Aorta (tissue), 5 donors: ENCODE measurements at regions of chr18 and their contacts with region 1.

Region 1: GRCh38 chr18:3593904-3594661 is 144.1 kb downstream of the TGIF1 start:
- DNase-seq: peak; percentile 89 to 90
- ATAC-seq: peak; percentile 94
- H3K4me3 ChIP-seq: peak overlapping the region; percentile 59 to 85
- H3K27ac ChIP-seq: peak overlapping the region; percentile 95 to 100
- H3K4me1 ChIP-seq: peaks cover 7 to 13% of the 10 kb centered on the region in 2 donors
- H3K27me3 ChIP-seq: no peaks in the 10 kb centered on the region

Region 2: DNA sequence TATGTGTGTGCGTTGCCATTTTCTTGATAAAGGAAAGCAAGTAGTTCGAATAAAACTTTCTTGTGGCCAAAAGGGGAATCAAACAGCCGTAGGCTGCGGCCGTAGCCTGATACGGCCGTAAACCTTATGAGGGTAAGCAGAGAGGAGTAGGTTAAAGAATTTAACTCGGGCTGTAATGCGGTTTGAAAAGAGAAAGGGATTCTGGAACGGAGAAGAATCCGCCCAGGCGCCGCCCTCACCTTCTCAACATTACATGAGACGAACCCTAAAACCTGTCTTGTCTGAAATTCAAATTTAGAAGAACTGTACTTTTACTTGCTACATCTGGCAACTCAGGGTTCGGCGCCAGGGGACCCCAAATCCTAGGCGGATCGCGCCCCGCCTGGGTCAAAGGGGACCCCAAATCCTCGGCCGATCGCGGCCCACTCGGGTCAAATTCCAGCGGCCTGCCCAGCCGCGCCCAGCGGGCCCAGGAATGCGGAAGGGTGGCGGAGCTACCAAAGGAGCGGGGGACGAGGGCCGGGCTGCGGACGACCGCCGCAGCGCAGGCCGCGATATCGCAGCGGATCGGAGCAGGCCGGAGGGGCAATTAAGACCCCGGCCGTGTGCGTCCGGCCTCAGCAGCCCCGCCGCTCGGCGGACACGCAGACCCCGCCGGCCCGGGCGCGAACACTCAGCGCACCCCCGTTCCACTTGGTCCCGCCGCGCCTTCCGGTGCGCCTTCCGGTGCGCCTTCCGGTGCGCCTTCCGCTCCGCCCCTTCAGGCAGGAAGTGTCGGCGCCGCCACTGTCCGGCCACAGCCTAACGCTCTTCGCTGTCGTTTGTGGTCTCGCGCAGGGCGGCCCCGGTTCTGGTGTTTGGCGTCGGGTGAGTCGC is 332.5 kb before region 1 on chr18 and contains the start of gene MYL12B:
- intact Hi-C with region 1: loop called in 1 of 2 experiments (anchors 10 kb)
- DNase-seq: peak; percentile 87 to 92
- ATAC-seq: peak; percentile 95
- H3K4me3 ChIP-seq: peak within 1 kb of the TSS; percentile 65 to 87
- H3K27ac ChIP-seq: peak within 1 kb of the TSS; percentile 66 to 87
- H3K4me1 ChIP-seq: peaks cover 0 to 7% of the 10 kb centered on the region in 2 donors
- H3K27me3 ChIP-seq: no peaks in the 10 kb centered on the region
- total RNA-seq, gene MYL12B: 259 to 324 TPM

Region 3: DNA sequence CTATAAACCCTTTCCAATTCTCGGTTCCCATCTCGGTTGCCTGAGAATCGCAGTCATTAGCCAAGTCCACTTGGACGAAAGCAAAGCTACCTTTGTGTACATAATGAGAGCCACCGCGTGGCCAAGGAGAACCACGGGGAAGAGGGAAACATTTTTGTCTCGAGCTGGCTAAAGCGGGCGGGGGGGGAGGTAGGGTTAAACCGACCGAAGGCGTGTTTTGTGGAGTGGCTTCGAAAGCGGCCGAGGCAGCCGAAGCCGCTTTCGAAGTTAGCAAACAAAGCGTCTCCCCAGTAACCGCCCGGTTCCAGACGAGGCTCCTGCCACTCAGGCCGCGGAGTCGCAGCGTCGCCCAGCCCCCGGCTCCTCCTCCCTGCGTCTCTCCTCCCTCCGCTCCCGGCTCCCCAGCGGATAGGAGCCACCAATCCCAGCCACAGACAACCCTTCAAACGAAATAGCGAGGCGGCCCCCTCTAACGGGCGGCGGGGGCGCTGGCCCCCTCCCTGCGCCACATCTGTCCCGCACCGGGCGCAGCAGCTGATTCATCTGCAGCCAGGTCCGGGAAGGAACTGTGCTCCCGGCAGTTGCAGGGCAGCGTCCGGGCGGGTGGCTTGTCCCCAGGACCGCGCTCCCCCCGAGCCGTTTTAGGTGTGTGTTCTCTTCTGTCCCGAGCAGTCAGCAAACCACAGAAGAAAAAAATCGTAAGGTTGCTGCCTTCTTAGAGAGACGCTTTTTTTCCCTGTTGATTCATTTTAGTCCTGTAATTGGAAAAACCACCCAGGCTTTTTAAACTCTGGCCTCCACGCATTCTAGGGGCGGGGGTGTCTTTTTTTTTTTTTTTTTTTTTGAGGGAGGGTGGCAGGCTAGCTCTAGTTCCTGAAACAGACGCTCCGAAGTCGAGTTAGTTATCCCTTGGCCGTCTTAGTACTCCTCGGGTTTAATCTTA is 145.9 kb before region 1 on chr18:
- intact Hi-C with region 1: loop called (anchors 2 to 5 kb)
- DNase-seq: peak; percentile 97 to 98
- ATAC-seq: peak; percentile 86
- H3K4me3 ChIP-seq: peak overlapping the region; percentile 67 to 85
- H3K27ac ChIP-seq: peak overlapping the region; percentile 86 to 88
- H3K4me1 ChIP-seq: peaks cover 0 to 1% of the 10 kb centered on the region in 2 donors
- H3K27me3 ChIP-seq: no peaks in the 10 kb centered on the region

Region 4: GRCh38 chr18:3623769-3624545 is 29.9 kb after region 1 on chr18:
- intact Hi-C with region 1: loop called in 1 of 2 experiments (anchors 1 kb)
- DNase-seq: peak; percentile 85 to 93
- ATAC-seq: peak; percentile 84
- H3K4me3 ChIP-seq: no peak overlapping the region
- H3K27ac ChIP-seq: peak overlapping the region; percentile 65 to 70
- H3K4me1 ChIP-seq: peaks cover 0 to 2% of the 10 kb centered on the region in 2 donors
- H3K27me3 ChIP-seq: no peaks in the 10 kb centered on the region

Region 5: DNA sequence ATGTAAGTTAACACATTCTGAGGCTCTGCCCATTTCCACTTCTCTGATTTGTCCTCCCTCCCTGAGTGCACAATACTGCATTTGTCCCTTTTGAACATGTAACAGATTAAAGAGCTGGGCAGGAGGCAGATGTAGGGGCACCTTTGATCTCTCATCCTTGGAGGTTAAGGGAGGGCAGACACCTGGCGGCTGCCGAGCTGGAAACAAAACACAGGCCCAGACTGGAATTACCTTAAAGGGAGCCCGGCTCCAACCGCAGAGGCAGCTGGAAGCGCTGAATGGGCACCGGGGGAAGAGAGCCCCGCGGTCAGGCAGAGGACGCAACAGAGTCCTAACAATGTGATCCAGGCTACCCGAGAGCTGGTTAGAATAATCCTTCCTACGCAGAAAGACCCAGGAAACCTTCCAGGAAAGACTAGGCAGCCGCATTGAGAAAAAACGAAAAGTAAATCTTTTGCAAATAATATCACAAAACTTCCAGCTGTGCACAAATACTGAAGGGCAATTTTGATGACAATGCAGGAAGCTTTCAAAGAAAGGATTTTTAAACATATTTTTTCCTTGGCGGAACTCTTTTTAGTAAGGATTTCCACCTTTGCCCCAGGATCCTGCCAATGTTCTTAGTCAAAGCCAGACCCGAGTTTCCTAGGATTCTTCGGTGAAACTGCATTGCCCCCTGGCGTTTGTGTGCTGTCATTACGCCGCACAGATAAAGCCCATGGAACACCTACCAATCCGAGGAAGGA is 71.9 kb after region 1 on chr18:
- intact Hi-C with region 1: loop called (anchors 2 to 5 kb)
- DNase-seq: peak; percentile 84 to 92
- ATAC-seq: peak; percentile 95
- H3K4me3 ChIP-seq: no peak overlapping the region
- H3K27ac ChIP-seq: peak overlapping the region; percentile 13 to 30
- H3K4me1 ChIP-seq: no peaks in the 10 kb centered on the region
- H3K27me3 ChIP-seq: no peaks in the 10 kb centered on the region

Region 6: GRCh38 chr18:4017480-4017879 is 423.4 kb after region 1 on chr18:
- intact Hi-C with region 1: no loop called
- DNase-seq: no peak
- ATAC-seq: no peak
- H3K4me3 ChIP-seq: no peak overlapping the region
- H3K27ac ChIP-seq: no peak overlapping the region
- H3K4me1 ChIP-seq: no peaks in the 10 kb centered on the region
- H3K27me3 ChIP-seq: no peaks in the 10 kb centered on the region